Left cardiac atrium (tissue), 4 donors: ENCODE measurements at regions of chr20 and their contacts with region 1.

Region 1: DNA sequence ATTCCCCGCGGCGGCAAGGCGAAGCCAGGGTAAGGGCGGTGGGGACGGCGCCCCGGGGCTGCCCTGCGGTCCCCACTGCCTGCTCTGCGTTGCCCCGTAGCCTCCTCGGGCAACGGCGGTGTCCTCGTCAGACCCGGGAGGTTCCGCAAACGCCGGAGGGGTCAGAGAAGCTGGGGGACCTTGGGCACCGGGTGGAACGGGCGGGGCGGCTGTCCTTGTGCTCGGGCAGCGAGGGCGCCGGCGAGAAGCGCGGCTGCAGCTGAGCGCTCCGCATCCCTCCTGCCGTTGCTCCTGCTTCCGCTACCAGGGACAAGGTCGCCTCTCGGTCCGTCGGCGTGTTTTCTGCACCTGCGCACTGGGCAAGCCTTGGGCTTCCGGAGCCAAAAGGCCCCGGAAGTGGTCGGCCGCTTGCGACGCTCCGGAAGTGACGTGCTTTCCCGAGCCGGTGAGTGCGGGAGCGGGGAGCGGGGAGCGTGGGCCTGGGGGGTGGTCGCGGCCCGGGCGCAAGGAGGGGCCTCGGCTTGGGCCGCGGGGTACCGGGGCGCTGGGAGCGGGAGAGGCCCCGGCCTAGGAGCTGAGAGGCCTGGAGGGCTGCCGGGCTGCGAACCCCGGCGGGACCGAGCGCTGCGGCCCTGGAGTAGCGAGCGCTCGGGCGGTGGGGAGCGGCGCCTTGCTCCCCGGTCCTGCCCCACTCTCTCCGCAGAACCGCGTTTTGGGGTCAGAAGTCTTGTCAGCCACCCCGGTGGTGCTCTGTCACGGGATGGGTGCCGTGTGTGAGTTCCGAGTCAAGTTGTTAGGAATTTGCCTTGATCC is at the start of gene MTG2:
- DNase-seq: peak; percentile 97
- ATAC-seq: peak; percentile 97 to 98
- total RNA-seq, gene MTG2: 19.1 to 28.9 TPM

Region 2: GRCh38 chr20:62237801-62238571 is 55.2 kb after region 1 on chr20 and contains the start of gene OSBPL2:
- intact Hi-C with region 1: loop called in 1 of 2 experiments (anchors 10 kb)
- DNase-seq: peak; percentile 99
- ATAC-seq: peak; percentile 98 to 99
- total RNA-seq, gene OSBPL2: 40.1 to 41.2 TPM

Region 3: DNA sequence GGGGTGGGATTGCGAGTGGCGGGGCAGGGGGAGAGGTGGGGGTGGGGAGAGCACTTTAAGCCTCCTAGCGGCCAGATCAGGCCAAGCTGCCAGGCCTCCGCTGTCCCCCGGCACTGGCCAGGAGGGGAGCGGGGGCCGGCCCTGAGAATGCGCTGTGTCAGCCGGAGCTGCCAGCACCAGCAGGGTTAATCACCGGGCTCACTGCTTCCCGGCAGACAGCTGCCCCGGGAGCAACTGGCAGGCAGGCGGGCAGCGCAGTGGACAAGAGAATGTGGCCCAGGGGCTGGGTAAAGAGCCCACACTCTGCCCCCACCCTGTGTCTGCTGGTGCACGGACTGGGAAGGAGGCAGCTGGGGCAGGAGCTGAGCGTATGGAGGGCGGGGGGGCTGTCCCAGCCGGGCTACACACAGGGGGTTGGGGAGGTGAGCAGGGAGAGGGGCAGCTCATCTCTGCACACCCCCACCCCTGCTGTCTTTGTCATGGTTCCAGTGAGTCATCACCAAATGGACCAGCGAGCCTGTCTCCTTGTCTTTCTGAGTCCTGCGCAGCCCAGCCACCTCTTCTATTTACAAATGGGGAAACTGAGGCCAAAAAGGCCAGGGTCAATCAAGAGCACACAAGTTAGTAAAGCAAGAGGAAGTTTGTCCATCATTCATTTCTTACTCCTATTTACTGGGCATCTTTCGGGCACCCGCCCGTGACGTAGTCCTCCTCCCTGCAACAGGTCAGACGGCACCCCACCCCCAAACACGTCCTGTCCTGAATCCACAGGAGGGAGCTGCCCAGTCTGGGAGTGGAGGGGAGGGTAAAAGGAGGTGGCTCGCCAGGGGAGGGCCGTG is 186.4 kb after region 1 on chr20:
- intact Hi-C with region 1: loop called in 1 of 2 experiments (anchors 10 kb)
- DNase-seq: no peak
- ATAC-seq: peak; percentile 5 to 8